Activated naive CD4-positive, alpha-beta T cell treated with anti-CD3 and anti-CD28 coated beads for 36 hours (primary cell): ENCODE measurements at regions of chr2 and their contacts with region 1.

Region 1: DNA sequence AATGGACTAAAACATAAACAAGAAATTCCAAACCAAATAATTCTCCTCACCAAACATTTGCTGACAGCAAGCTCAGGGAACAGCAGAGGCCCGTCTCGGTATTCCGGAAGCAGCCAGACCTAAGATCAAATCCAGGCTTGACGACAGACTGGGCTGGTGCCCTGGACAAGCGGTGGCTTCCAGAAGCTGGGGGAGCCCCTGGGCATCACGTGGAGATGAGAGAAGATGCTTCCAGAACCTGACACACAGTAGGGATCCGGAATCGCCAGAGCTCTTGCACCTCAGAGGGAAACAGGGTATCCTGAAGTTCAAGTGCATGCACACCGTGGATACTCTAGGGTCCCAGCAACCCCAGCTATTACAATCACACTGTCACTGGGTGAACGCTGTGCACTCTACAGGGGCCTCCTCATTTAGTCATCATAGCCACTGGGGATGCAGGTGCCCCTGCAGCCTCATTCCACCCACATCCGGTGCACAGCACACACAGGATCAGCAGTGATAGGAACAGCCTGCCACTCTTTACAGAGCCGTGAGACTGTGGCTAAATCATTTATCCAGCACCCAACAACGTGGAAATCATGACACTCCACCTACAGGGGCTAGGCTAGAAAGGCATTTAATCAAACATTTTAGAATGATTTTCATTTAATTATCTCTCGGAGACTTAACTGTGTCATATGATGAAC is 102.6 kb downstream of the HDAC4 start:
- DNase-seq: peak; percentile 91
- H3K4me3 Mint-ChIP-seq: peak overlapping the region; percentile 67
- H3K27ac Mint-ChIP-seq: peak overlapping the region; percentile 74
- H3K4me1 Mint-ChIP-seq: peaks cover 74% of the 10 kb centered on the region
- H3K27me3 Mint-ChIP-seq: peaks cover 2% of the 10 kb centered on the region

Region 2: DNA sequence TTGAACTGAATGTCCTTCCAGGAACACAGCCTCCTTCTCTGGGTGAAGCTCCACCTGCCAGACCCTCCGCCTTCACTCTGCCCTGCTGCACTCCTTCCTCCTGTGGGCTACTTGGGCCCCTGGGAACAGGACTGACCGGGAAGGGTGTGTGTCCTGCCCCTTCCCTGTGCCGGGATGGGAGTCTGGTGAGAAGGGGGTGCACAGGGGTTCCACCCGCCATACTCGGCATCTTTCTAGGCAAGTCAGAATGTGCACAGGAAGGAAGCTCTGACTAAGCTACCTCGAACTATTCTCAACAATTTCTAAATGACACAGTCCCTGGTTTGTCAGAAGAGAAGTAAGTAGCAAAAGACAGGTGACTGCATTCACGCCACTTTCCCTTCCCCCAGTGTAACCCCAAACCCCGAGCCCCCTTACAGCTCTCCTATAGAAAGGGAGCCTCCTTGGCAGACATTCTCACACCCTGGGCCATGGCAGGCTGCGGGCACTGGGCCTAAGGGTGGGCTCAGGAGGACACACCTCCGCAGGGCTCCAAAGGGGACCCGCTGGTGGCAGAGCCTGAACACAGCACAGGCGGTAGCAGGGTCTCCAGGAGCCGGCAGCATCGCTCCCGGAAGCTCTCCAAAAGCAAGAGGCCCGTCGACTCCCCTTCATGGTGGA is 81.5 kb before region 1 on chr2:
- CTCF ChIA-PET with region 1: no interaction called
- intact Hi-C with region 1: loop called (anchors 1 kb)
- DNase-seq: peak; percentile 72
- H3K4me3 Mint-ChIP-seq: peak overlapping the region; percentile 69
- H3K27ac Mint-ChIP-seq: peak overlapping the region; percentile 87
- H3K4me1 Mint-ChIP-seq: peaks cover 71% of the 10 kb centered on the region
- H3K27me3 Mint-ChIP-seq: no peaks in the 10 kb centered on the region

Region 3: GRCh38 chr2:239275044-239275685 is 23.1 kb before region 1 on chr2:
- CTCF ChIA-PET with region 1: interaction called, 13 read pairs
- intact Hi-C with region 1: loop called (anchors 1 kb)
- DNase-seq: peak; percentile 93
- H3K4me3 Mint-ChIP-seq: peak overlapping the region; percentile 51
- H3K27ac Mint-ChIP-seq: peak overlapping the region; percentile 77
- H3K4me1 Mint-ChIP-seq: peaks cover 51% of the 10 kb centered on the region
- H3K27me3 Mint-ChIP-seq: peaks cover 24% of the 10 kb centered on the region

Region 4: GRCh38 chr2:239321596-239322415 is 23.5 kb after region 1 on chr2:
- CTCF ChIA-PET with region 1: interaction called, 5 read pairs
- intact Hi-C with region 1: loop called (anchors 1 kb)
- DNase-seq: peak; percentile 94
- H3K4me3 Mint-ChIP-seq: peak overlapping the region; percentile 55
- H3K27ac Mint-ChIP-seq: peak overlapping the region; percentile 93
- H3K4me1 Mint-ChIP-seq: peaks cover 77% of the 10 kb centered on the region
- H3K27me3 Mint-ChIP-seq: no peaks in the 10 kb centered on the region

Region 5: GRCh38 chr2:241019441-241020139 is 1721.3 kb after region 1 on chr2:
- CTCF ChIA-PET with region 1: no interaction called
- intact Hi-C with region 1: no loop called
- DNase-seq: no peak
- H3K4me3 Mint-ChIP-seq: no peak overlapping the region
- H3K27ac Mint-ChIP-seq: no peak overlapping the region
- H3K4me1 Mint-ChIP-seq: no peaks in the 10 kb centered on the region
- H3K27me3 Mint-ChIP-seq: no peaks in the 10 kb centered on the region